Activated CD4-positive, alpha-beta T cell treated with anti-CD3 and anti-CD28 coated beads, Interleukin-2, amount 10 ng/mL, durations not matched to agents 24 days and 14 days (primary cell): ENCODE measurements at regions of chr14 and their contacts with region 1.

Region 1: GRCh38 chr14:100025111-100025510 is 40.1 kb upstream of the EVL start:
- DNase-seq: peak; percentile 74
- H3K4me3 Mint-ChIP-seq: no peak overlapping the region
- H3K27ac Mint-ChIP-seq: peak overlapping the region; percentile 28
- H3K4me1 Mint-ChIP-seq: peaks cover 15% of the 10 kb centered on the region
- H3K27me3 Mint-ChIP-seq: no peaks in the 10 kb centered on the region

Region 2: DNA sequence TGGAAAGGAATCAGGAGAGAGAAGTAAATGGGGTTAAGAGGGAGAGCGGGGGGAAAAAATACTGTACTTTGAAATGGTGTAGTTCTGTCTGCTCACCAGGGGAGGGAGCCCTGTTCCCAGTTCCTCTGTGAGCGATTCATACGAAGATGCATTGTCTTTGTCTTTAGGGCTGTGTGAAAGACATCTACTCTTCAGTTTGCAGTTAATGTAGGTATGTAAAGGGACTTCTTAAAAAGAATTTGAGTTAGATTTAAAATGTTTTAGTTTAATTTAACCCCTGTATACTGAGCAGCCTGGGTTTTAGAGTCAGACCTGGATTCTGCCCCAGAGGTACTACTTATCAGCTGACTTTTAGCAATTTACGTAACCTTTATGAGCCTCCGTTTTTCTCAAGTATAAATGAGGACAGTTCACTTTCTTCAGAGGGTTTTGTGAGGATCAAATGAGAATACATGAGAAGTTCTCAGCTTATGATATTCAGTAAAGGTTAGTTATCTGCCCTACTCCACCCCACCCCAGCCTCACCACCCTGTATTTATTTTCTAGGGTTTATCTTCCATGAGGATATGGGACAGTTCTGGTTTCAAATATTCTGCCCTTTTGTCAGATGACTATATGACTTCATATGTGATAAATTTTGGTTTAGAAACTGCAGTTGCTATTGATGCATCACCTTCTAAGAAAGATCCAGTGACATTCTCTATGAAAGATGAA is 42.4 kb before region 1 on chr14:
- intact Hi-C with region 1: loop called (anchors 1 kb)
- DNase-seq: peak; percentile 89
- H3K4me3 Mint-ChIP-seq: no peak overlapping the region
- H3K27ac Mint-ChIP-seq: no peak overlapping the region
- H3K4me1 Mint-ChIP-seq: peaks cover 16% of the 10 kb centered on the region
- H3K27me3 Mint-ChIP-seq: no peaks in the 10 kb centered on the region

Region 3: DNA sequence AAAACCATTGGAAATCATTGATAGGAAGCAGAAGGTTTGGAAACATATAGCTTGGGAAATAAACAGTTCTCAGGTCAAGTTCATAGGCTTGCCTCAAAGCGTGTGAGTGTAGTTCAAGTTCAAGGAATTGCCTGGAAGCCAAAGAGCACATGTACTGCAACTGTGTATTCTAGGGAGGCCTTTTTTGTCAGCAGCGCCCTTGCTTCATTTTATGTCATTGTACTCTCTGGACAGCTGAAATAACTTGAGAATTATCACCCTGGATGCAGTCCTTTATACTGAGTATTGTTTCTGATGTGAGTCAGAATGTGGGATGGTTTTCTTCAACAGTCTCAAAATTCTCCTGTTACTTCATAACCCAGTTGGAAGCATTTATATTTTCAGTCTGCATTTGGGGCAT is 24.1 kb after region 1 on chr14:
- intact Hi-C with region 1: no loop called
- DNase-seq: no peak
- H3K4me3 Mint-ChIP-seq: no peak overlapping the region
- H3K27ac Mint-ChIP-seq: peak overlapping the region; percentile 8
- H3K4me1 Mint-ChIP-seq: peaks cover 24% of the 10 kb centered on the region
- H3K27me3 Mint-ChIP-seq: no peaks in the 10 kb centered on the region